HEK293T (cell line): ENCODE measurements at regions of chr9 and their contacts with region 1.

Region 1: DNA sequence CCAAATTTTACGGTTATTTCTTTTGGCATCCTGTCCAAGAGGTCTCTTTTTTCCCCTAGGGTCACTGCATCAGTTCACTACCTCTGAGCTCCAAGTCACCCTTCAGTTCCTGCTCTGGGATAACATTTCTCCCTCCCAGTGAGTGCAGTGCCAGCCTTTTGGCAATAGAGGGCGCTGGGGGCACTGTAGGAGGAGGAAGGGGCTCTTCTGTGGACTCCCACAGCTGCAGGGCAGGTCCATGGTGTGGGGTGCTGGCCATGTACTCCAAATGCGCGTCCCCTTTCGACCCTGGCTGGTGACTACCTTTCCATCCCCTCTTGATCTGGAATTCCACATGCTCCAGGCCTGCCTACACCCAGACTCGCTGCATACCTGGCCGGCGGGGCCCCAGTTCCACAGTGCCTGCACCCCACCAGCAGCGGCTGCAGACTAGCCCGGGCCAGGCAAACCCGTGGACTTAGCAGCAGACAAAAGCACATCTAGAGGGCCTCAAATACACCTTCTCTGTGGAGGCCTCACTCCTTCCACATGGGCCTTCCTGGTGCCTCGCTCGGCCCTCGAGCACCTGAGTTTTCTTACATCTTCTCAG is 20.4 kb upstream of the NINJ1 start:
- DNase-seq: peak; percentile 79

Region 2: GRCh38 chr9:93098236-93098946 is 56.0 kb before region 1 on chr9:
- CTCF ChIA-PET with region 1: no interaction called
- POLR2A ChIA-PET with region 1: no interaction called
- DNase-seq: no peak

Region 3: GRCh38 chr9:93141771-93142483 is 12.5 kb before region 1 on chr9:
- CTCF ChIA-PET with region 1: interaction called, 10 read pairs
- POLR2A ChIA-PET with region 1: no interaction called
- DNase-seq: no peak

Region 4: GRCh38 chr9:93171261-93171990 is 17.0 kb after region 1 on chr9:
- CTCF ChIA-PET with region 1: interaction called, 10 read pairs
- POLR2A ChIA-PET with region 1: no interaction called
- DNase-seq: no peak

Region 5: DNA sequence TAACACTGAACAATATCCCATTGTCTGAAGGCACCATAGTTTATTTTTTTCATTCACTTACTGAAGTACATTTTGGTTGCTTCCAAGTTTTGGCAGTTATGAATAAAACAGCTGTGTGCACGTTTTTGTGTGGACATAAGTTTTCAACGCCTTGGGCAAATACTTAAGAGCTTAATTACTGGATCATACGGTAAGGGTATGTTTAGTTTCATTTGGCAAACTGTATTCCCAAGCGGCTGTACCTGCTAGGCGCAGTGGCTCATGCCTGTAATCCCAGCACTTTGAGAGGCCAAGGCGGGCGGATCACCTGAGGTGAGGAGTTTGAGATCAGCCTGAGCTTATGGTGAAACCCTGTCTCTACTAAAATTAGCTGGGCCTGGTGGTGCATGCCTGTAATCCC is 233.4 kb after region 1 on chr9:
- CTCF ChIA-PET with region 1: no interaction called
- POLR2A ChIA-PET with region 1: no interaction called
- DNase-seq: no peak